Panc1 (cell line): ENCODE measurements at regions of chr22 and their contacts with region 1.

Region 1: DNA sequence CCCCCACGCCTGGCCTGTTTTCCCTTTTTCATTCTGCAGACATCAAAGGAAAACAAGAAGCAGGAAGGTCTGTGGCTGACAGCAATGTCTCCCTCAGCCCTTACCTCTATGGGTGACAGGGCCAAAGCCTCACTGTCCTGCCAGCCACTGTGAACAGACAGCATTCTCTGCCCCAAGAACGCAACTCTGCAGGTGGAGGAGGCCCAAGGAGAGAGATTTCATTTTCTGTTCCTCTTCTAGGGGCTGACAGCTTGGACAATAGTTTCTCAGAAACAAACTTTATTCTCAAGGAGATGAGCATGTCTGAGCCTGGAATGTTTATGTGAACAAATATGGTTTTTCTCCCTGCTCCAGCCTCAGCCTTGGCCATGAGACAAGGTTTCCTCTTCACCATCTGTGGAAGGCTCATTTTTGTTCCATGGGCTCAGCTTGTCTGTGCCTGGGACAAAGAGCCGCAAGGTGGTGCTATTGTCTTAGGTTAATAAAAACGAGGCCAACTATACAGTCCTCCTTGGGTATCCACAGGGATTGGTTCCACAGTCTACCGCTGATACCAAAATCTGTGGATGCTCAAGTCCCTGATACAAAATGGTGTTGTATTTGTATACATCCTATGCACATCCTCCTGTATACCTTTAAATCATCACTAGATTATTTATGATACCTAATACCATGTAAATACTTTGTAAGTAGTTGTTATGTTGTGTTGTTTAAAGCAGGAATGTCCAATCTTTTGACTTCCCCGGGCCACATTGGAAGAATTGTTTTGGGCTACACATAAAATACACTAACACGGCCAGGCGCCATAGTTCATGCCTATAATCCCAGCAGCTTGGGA is 5.8 kb downstream of the PIWIL3 start:
- DNase-seq: no peak
- ATAC-seq: peak; percentile 98
- H3K4me3 ChIP-seq: no peak overlapping the region
- H3K27ac ChIP-seq: no peak overlapping the region
- H3K4me1 ChIP-seq: no peaks in the 10 kb centered on the region
- H3K27me3 ChIP-seq: no peaks in the 10 kb centered on the region
- CTCF ChIP-seq: peak; percentile 77

Region 2: DNA sequence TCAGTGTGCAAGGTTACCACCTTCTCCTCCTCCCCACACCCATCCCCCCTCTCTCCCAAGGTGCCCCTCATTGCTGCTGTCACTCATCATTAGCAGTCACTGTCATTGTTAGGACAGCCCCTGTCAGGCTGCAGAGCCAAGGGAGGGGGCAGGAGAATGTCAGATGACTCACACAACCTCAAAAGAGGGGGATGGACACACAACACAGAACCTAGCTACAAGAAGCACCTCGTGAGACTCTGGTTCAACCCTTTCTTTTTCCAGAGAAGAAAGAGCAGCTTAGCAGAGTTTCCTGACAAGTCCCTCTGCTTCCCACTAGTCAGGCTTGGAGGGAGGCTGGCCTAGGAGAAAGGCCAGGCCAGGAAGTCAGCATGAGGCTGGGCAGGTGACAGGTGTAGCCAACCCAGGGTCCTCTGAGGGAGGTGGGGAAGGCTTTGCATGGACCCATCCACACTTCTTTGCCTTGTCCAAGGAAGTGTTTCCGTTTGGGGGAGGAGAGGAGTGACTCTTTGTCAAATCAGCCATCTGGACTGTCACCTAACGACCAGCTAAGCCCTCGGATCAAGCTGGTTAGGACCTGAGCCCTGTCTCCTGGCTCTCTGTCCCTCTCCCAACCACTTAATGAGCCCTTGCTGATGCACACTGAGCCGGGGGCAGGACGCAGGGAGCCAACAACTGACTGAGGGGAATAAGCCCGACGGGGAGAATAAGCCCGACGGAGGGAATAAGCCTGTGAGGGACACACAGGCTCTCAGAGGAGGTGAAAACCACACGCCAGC is 323.1 kb before region 1 on chr22:
- CTCF ChIA-PET with region 1: no interaction called
- POLR2A ChIA-PET with region 1: no interaction called
- in situ Hi-C with region 1: no loop called
- intact Hi-C with region 1: no loop called
- DNase-seq: no peak
- ATAC-seq: no peak
- H3K4me3 ChIP-seq: no peak overlapping the region
- H3K27ac ChIP-seq: no peak overlapping the region
- H3K4me1 ChIP-seq: no peaks in the 10 kb centered on the region
- H3K27me3 ChIP-seq: no peaks in the 10 kb centered on the region
- CTCF ChIP-seq: no peak

Region 3: DNA sequence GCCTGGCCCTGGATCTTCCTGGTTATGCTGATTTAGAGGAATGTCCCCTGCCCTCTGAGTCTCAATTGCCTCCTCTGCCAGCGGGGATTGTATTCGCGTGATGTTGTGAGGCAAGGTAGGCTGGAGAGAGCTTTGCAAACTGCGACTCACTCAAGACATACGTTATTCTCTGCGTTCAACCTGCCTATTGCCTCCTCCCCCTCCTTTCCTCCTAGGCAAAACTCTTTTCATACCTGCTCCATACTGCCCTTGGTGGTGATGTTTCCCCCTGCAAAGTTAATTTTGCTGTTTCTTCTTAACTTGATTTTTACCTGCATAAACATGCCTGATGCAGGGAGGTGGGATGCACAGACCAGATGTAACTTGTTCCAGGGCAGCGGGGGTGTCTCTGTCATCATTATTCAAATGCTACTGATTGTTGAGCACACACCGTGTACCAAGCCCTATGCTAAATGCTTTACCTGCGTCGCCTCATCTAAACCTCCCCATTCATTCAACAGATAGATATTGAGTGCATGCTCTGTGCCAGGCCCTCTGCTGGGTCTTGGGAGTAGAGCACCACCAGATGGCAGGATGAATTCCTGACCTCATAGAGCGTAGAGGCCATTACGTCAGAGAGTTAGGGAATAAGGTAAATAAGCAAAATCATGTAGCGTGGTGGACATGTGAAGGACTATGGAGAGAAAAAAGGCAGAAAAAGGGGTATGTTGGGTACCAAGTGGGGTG is 66.3 kb after region 1 on chr22:
- CTCF ChIA-PET with region 1: interaction called, 4 read pairs
- POLR2A ChIA-PET with region 1: no interaction called
- in situ Hi-C with region 1: no loop called
- intact Hi-C with region 1: loop called (anchors 2 kb)
- DNase-seq: no peak
- ATAC-seq: peak; percentile 81
- H3K4me3 ChIP-seq: no peak overlapping the region
- H3K27ac ChIP-seq: no peak overlapping the region
- H3K4me1 ChIP-seq: no peaks in the 10 kb centered on the region
- H3K27me3 ChIP-seq: no peaks in the 10 kb centered on the region
- CTCF ChIP-seq: peak; percentile 61

Region 4: DNA sequence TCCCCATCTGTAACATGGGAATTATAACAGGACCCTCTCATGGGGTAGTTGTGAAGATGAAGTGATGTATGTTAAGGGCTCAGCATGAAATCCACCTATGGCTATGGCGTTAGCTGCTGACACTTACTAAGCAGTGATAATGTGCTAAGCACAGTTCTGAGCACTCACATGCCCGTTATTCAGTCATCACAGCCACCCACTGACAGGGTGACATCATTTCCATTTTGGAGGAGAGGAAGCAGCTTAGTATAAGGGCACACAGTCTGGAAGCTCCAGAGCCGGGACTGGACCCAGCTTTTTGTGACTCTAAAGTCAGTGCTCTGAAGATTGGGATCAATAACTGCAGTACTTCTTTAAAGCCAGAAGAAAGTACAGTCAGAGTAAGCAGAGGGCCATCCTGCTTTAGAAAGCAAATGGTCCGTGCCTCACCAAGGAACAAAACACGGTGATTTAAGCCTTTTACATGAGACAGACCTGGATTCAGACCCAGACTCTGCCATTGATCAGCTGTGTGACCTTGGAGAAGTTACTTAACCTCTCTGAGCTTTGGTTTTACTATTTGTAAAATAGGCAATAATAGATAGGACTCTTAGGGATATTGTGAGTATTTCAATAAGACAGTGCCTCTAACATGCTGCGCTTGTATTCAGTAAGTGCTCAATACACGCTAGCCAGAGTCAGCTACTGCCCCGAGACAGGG is 98.7 kb after region 1 on chr22:
- CTCF ChIA-PET with region 1: no interaction called
- POLR2A ChIA-PET with region 1: no interaction called
- in situ Hi-C with region 1: no loop called
- intact Hi-C with region 1: no loop called
- DNase-seq: no peak
- ATAC-seq: no peak
- H3K4me3 ChIP-seq: no peak overlapping the region
- H3K27ac ChIP-seq: no peak overlapping the region
- H3K4me1 ChIP-seq: no peaks in the 10 kb centered on the region
- H3K27me3 ChIP-seq: no peaks in the 10 kb centered on the region
- CTCF ChIP-seq: no peak